MCF 10A (cell line): ENCODE measurements at regions of chr6 and their contacts with region 1.

Region 1: GRCh38 chr6:32127717-32128592 is at the start of gene ATF6B:
- DNase-seq: peak; percentile 99
- H3K4me3 Mint-ChIP-seq: peak within 1 kb of the TSS; percentile 99
- H3K27ac Mint-ChIP-seq: peak within 1 kb of the TSS; percentile 96
- H3K4me1 Mint-ChIP-seq: peaks cover 26% of the 10 kb centered on the region
- H3K27me3 Mint-ChIP-seq: no peaks in the 10 kb centered on the region
- CTCF ChIP-seq: no peak
- total RNA-seq, gene ATF6B: 65.6 and 86.5 TPM in 2 replicates

Region 2: GRCh38 chr6:32146287-32146686 is 18.3 kb after region 1 on chr6:
- CTCF ChIA-PET with region 1: no interaction called
- POLR2A ChIA-PET with region 1: interaction called, 10 read pairs
- intact Hi-C with region 1: no loop called
- DNase-seq: no peak
- H3K4me3 Mint-ChIP-seq: no peak overlapping the region
- H3K27ac Mint-ChIP-seq: no peak overlapping the region
- H3K4me1 Mint-ChIP-seq: peaks cover 12% of the 10 kb centered on the region
- H3K27me3 Mint-ChIP-seq: no peaks in the 10 kb centered on the region
- CTCF ChIP-seq: no peak

Region 3: GRCh38 chr6:32190054-32190851 is 62.3 kb after region 1 on chr6 and contains the start of gene PBX2:
- CTCF ChIA-PET with region 1: interaction called, 5 read pairs
- POLR2A ChIA-PET with region 1: interaction called, 42 read pairs
- intact Hi-C with region 1: no loop called
- DNase-seq: peak; percentile 92
- H3K4me3 Mint-ChIP-seq: peak within 1 kb of the TSS; percentile 83
- H3K27ac Mint-ChIP-seq: peak within 1 kb of the TSS; percentile 86
- H3K4me1 Mint-ChIP-seq: peaks cover 33% of the 10 kb centered on the region
- H3K27me3 Mint-ChIP-seq: no peaks in the 10 kb centered on the region
- CTCF ChIP-seq: no peak
- total RNA-seq, gene PBX2: 48.1 and 49.2 TPM in 2 replicates

Region 4: GRCh38 chr6:32195652-32195901 is 67.6 kb after region 1 on chr6:
- CTCF ChIA-PET with region 1: interaction called, 5 read pairs
- POLR2A ChIA-PET with region 1: interaction called, 42 read pairs
- intact Hi-C with region 1: no loop called
- DNase-seq: peak; percentile 99
- H3K4me3 Mint-ChIP-seq: peak overlapping the region; percentile 93
- H3K27ac Mint-ChIP-seq: peak overlapping the region; percentile 98
- H3K4me1 Mint-ChIP-seq: peaks cover 12% of the 10 kb centered on the region
- H3K27me3 Mint-ChIP-seq: no peaks in the 10 kb centered on the region
- CTCF ChIP-seq: no peak